Heart left ventricle (tissue), 16 donors: ENCODE measurements at regions of chr9 and their contacts with region 1.

Region 1: DNA sequence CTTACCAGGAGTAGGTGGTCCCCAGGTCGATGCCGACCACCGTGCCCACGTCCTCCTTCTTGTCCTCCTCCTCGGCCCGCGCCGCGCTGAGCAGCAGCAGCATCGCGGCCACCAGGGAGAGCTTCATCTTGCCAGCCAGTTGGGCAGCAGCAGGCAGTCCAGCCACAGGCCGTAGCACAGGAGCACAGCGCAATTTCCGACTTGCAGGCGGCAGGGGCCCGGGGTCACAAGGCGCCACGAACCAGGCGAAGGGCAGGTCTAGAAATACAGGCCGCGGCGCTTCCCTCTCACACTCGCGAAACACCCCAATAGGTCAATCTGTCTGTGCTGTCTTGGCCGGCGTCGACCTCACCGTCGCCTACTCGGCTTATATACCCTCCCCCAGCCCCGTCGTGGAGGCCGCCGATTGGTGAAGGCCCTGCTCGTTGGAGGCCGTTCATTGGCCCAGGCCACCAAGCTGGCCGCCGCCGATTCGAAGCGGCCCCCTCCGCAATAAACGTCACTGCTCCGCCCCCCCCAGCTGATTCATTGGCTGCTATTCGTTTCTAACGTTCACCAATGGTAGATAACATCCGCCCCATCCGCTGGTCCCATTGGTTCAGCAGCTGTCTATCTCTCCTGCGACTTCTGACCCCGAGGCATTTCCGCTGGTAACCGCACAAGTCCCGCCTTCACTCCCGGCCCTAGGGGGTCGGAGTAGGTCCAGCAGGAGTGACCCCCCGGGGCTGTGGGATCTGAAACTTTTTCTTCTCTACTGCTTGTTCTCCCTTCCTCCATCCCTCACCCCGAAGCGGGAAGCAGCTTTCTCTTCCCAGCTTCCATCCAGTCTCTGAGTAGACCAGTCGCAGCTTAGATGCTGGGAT is at the start of gene HSPA5:
- DNase-seq: peak; percentile 100
- ATAC-seq: peak; percentile 97 to 99 (median 98)
- H3K4me3 ChIP-seq: peak within 1 kb of the TSS; percentile 73 to 99 (median 91)
- H3K27ac ChIP-seq: peak within 1 kb of the TSS; percentile 93 to 98 (median 96)
- H3K4me1 ChIP-seq: peaks cover 6 to 48% (median 40%) of the 10 kb centered on the region in 12 donors
- H3K27me3 ChIP-seq: no peaks in the 10 kb centered on the region
- CTCF ChIP-seq: peak in 5 of 12 donors; percentile 20 to 41 (median 24)
- POLR2A ChIP-seq: peak; percentile 97 to 99
- total RNA-seq, gene HSPA5: 110 to 383 (median 242) TPM

Region 2: GRCh38 chr9:124764774-124765438 is 476.3 kb before region 1 on chr9:
- intact Hi-C with region 1: loop called in 1 of 10 experiments (anchors 10 kb)
- DNase-seq: no peak
- ATAC-seq: peak in 1 of 4 donors; percentile 41
- H3K4me3 ChIP-seq: no peak overlapping the region
- H3K27ac ChIP-seq: no peak overlapping the region
- H3K4me1 ChIP-seq: peaks cover 0 to 27% (median 6%) of the 10 kb centered on the region in 12 donors
- H3K27me3 ChIP-seq: peaks cover 0 to 41% (median 8%) of the 10 kb centered on the region in 9 donors
- CTCF ChIP-seq: peak in 7 of 12 donors; percentile 9 to 33 (median 29)
- POLR2A ChIP-seq: no peak

Region 3: GRCh38 chr9:124940693-124941453 is 300.4 kb before region 1 on chr9 and contains the start of gene GOLGA1:
- intact Hi-C with region 1: loop called in 1 of 10 experiments (anchors 2 kb)
- DNase-seq: peak; percentile 95 to 98 (median 97)
- ATAC-seq: peak; percentile 97 to 99 (median 98)
- H3K4me3 ChIP-seq: peak within 1 kb of the TSS; percentile 60 to 99 (median 86)
- H3K27ac ChIP-seq: peak within 1 kb of the TSS; percentile 87 to 99 (median 96)
- H3K4me1 ChIP-seq: peaks cover 0 to 19% (median 15%) of the 10 kb centered on the region in 12 donors
- H3K27me3 ChIP-seq: no peaks in the 10 kb centered on the region
- CTCF ChIP-seq: peak in 1 of 12 donors; percentile 16
- POLR2A ChIP-seq: peak in 1 of 2 donors; percentile 86
- total RNA-seq, gene GOLGA1: 13.9 to 22.9 (median 19.4) TPM

Region 4: GRCh38 chr9:125189361-125190289 is 51.6 kb before region 1 on chr9 and contains the start of gene PPP6C:
- intact Hi-C with region 1: loop called in 1 of 10 experiments (anchors 5 kb)
- DNase-seq: peak; percentile 98 to 99 (median 98)
- ATAC-seq: peak; percentile 98 to 99 (median 99)
- H3K4me3 ChIP-seq: peak within 1 kb of the TSS; percentile 60 to 100 (median 99)
- H3K27ac ChIP-seq: peak within 1 kb of the TSS; percentile 71 to 97 (median 93)
- H3K4me1 ChIP-seq: peaks cover 0 to 49% (median 35%) of the 10 kb centered on the region in 12 donors
- H3K27me3 ChIP-seq: no peaks in the 10 kb centered on the region
- CTCF ChIP-seq: peak; percentile 53 to 86 (median 64)
- POLR2A ChIP-seq: peak; percentile 8 to 81
- total RNA-seq, gene PPP6C: 26.6 to 40.7 (median 37.7) TPM

Region 5: GRCh38 chr9:125200210-125201047 is 40.8 kb before region 1 on chr9 and contains the start of gene RABEPK:
- intact Hi-C with region 1: loop called in 4 of 10 experiments (anchors 1 to 5 kb)
- DNase-seq: peak; percentile 93 to 95 (median 95)
- ATAC-seq: peak; percentile 99 to 100 (median 100)
- H3K4me3 ChIP-seq: peak within 1 kb of the TSS; percentile 52 to 97 (median 77)
- H3K27ac ChIP-seq: peak within 1 kb of the TSS; percentile 7 to 96 (median 88)
- H3K4me1 ChIP-seq: peaks cover 0 to 15% (median 3%) of the 10 kb centered on the region in 12 donors
- H3K27me3 ChIP-seq: no peaks in the 10 kb centered on the region
- CTCF ChIP-seq: no peak
- POLR2A ChIP-seq: peak; percentile 34 to 92
- total RNA-seq, gene RABEPK: 7.4 to 12.2 (median 10.6) TPM

Region 6: DNA sequence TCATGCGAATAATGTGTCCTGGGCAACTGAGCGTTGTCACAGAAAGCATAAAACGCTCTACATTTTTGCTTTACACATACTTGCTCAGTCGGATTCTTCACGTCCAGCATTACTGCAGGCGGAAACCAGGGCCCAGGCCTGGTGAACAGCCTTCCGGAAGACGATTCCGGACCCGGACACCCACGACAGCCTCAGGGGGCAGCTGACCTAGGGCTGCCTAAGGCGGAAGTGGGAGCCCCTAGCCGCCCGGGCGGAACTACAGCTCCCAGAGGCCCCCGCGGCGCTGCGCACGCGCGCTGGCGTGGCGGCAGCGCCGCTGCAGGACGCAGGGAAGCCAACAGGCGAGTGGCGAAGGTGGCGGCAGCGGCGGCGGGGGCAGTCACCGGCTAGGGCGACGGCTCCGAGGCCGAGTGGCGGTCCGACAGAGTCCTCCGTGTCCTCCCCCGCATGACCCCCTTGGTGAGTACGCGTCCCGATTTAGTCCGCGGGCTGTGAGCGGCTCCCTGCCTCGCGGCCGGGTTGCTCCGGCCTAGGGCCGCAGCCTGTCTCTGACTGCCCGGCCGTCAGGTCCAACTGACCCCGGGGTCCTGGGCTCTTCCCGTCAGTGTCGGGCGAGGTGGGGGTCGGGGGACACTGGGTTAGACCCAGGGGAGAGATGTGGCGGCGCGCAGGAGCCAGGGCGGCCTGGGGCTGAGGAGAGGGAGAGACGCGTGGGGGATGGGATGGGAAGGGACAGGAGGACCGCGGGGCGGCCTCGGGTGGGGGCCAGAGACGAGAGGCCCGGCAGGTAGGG is 20.5 kb after region 1 on chr9 and contains the start of gene GAPVD1:
- intact Hi-C with region 1: loop called in 2 of 10 experiments (anchors 1 kb)
- DNase-seq: peak; percentile 88 to 95 (median 91)
- ATAC-seq: peak; percentile 96 to 99 (median 98)
- H3K4me3 ChIP-seq: peak within 1 kb of the TSS; percentile 66 to 100 (median 91)
- H3K27ac ChIP-seq: peak within 1 kb of the TSS; percentile 37 to 97 (median 85)
- H3K4me1 ChIP-seq: peaks cover 0 to 64% (median 20%) of the 10 kb centered on the region in 12 donors
- H3K27me3 ChIP-seq: peaks cover 0 to 4% (median 0%) of the 10 kb centered on the region in 9 donors
- CTCF ChIP-seq: peak in 10 of 12 donors; percentile 20 to 68 (median 50)
- POLR2A ChIP-seq: peak in 1 of 2 donors; percentile 74
- total RNA-seq, gene GAPVD1: 25.9 to 45.5 (median 32.7) TPM

Region 7: GRCh38 chr9:125626187-125626586 is 385.0 kb after region 1 on chr9:
- intact Hi-C with region 1: no loop called
- DNase-seq: no peak
- ATAC-seq: no peak
- H3K4me3 ChIP-seq: no peak overlapping the region
- H3K27ac ChIP-seq: no peak overlapping the region
- H3K4me1 ChIP-seq: peaks cover 0 to 28% (median 0%) of the 10 kb centered on the region in 12 donors
- H3K27me3 ChIP-seq: no peaks in the 10 kb centered on the region
- CTCF ChIP-seq: no peak
- POLR2A ChIP-seq: no peak

Region 8: DNA sequence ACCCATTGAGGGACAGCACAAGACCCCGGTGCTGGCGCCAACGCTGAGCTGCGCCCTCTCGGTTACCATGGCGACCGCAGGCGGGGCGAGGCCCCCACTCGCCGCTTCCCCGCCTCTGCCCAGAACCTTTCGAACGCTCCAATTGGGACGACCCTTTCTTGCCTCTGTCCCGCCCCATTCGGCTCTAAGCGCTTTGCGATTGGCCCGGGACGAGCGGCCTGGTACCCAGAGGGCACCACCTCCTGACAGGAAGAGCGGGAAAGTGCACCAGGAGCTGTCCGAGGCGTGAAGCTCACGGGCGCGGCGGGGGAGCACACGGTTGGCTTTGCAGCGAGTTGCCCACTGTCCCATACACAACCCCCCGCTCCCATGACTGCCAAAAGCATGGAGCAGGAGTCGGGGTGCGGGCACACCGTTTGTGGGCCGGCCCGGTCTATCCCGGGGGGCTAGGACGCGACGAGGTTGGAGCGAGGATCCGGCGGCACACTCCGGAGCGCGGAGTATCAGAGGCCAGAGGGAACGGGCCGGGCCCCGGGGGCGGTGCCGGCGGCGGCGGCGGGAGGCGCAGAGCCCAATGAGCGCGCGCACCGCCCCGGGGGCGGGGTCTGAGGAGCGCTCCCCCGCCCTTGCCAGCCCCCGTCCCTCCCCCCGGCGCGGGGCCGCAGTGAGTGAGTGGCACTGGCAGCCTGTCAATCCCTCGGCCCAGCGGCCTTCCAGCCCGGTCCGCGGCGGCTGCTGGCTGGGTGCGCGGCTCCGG is 505.0 kb after region 1 on chr9:
- intact Hi-C with region 1: loop called in 1 of 10 experiments (anchors 5 kb)
- DNase-seq: peak; percentile 96 to 97 (median 97)
- ATAC-seq: peak; percentile 95 to 96 (median 96)
- H3K4me3 ChIP-seq: peak overlapping the region; percentile 43 to 96 (median 76)
- H3K27ac ChIP-seq: peak overlapping the region; percentile 40 to 94 (median 88)
- H3K4me1 ChIP-seq: peaks cover 0 to 38% (median 12%) of the 10 kb centered on the region in 12 donors
- H3K27me3 ChIP-seq: no peaks in the 10 kb centered on the region
- CTCF ChIP-seq: peak in 2 of 12 donors; percentile 6 to 9
- POLR2A ChIP-seq: peak in 1 of 2 donors; percentile 65